PC-3 (cell line): ENCODE measurements at regions of chr15 and their contacts with region 1.

Region 1: DNA sequence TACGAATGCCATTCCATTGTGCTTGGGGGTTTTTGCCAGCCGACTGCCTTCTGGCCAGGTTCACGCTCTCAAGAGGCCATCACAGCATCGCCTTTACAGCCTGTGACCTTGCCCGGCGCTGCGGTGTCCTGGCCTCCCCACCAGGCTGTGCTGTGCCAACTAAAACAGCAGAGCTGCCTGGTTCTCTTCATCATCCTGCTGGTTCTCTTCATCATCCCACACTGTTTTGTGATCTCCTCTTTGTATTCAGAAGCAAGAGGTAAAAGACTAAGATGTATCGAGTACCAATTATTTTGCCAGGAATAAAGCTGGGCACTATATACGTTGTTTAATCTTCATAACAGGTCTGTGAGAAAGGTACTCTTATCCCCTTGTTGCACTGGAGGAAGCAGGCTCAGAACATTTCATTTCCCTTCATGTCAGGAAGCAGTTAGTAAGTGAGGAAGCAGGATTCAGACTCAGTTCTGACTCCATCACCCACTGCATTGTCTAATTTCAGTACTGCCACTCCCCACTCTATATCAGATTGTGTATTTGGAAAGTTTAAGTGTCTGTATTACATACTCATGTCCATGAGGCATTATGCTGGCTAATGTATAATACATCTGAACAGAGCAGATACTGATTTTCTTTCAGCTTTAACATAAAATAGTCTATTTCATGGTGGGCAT is 92.7 kb downstream of the LRRC28 start:
- DNase-seq: no peak
- ATAC-seq: no peak
- H3K4me3 ChIP-seq: no peak overlapping the region
- H3K27ac ChIP-seq: no peak overlapping the region
- H3K4me1 ChIP-seq: peaks cover 15% of the 10 kb centered on the region; the same call in 1 of the 2 replicates
- H3K27me3 ChIP-seq: no peaks in the 10 kb centered on the region
- CTCF ChIP-seq: peak; percentile 40

Region 2: DNA sequence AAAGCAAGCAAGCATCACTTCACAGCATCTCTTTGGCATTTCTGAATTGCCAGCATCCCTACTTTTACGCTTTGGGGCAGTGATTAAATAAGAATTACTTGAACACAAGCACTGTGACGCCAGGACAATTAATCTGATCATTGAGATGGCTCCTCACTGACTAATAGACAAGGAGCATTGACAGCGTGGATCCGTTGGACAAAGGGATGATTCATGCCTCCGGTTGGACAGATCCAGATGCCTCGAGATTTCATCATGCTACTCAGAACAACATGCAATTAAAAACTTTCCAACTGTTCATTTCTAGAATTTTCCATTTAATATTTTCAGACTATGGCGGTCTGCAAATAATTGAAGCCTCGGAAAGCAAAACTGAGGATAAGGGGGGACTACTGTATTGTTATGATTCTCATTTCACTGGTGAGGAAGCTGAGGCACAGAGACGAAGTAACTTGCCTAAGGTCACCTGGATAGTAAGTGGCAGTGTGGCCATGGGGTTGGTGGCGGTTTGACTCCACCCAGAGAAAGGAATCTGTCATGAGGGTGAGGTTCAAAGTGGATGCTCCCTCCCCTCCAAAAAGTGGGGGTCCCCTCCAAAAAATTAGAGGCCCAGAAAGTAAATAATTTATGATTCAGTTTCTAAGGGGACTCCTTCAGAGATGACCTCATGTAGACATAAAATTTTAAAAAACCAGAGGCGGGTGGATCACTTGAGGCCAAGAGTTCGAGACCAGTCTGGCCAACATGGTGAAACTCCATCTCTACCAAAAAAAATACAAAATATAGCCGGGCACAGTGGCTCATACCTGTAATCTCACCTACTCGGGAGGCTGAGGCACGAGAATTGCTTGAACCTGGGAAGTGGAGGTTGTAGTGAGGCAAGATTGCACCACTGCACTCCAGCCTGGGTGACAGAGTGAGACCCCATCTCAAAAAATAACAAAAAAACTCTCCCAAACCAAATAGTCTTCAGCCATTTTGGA is 324.2 kb before region 1 on chr15:
- CTCF ChIA-PET with region 1: no interaction called
- POLR2A ChIA-PET with region 1: no interaction called
- intact Hi-C with region 1: no loop called
- DNase-seq: peak; percentile 61
- ATAC-seq: no peak
- H3K4me3 ChIP-seq: no peak overlapping the region
- H3K27ac ChIP-seq: no peak overlapping the region
- H3K4me1 ChIP-seq: peaks cover 26% of the 10 kb centered on the region
- H3K27me3 ChIP-seq: no peaks in the 10 kb centered on the region
- CTCF ChIP-seq: no peak

Region 3: GRCh38 chr15:99315636-99316035 is 28.4 kb before region 1 on chr15:
- CTCF ChIA-PET with region 1: interaction called, 11 read pairs
- POLR2A ChIA-PET with region 1: no interaction called
- intact Hi-C with region 1: no loop called
- DNase-seq: peak; percentile 50
- ATAC-seq: peak; percentile 49; the same call in 1 of the 2 replicates
- H3K4me3 ChIP-seq: no peak overlapping the region
- H3K27ac ChIP-seq: no peak overlapping the region
- H3K4me1 ChIP-seq: peaks cover 10% of the 10 kb centered on the region
- H3K27me3 ChIP-seq: no peaks in the 10 kb centered on the region
- CTCF ChIP-seq: no peak

Region 4: DNA sequence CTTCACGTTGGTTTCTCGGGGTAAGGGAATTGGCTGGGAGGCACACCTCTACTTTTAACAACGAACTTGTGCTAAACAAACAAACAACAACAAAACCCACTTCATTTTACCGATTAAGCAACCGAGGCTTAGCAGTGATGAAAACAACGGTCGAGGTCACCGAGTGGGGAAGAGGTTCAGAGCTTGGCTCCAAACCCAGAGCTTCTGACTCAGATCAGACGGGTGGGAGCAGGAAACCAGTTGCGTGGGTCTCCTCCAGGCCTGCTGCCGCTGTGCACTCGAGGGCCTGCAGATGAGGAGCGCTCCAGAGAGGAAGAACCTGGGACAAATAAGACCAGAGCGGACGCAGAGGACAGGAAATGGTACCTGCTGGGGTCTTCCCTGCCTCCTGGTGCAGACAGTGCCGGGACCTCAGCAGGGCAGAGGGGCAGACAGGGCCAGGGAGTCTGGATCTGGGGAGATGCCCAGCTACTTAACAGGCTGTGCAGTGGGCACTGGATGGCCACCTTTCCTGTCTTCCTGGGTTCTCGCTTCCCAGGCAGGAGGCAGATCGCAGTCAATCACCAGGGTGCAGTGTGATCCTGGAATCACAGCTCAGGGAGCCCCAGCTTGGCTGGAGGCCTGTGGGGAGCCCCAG is 122.8 kb after region 1 on chr15:
- CTCF ChIA-PET with region 1: no interaction called
- POLR2A ChIA-PET with region 1: no interaction called
- intact Hi-C with region 1: no loop called
- DNase-seq: no peak
- ATAC-seq: no peak
- H3K4me3 ChIP-seq: no peak overlapping the region
- H3K27ac ChIP-seq: no peak overlapping the region
- H3K4me1 ChIP-seq: no peaks in the 10 kb centered on the region
- H3K27me3 ChIP-seq: no peaks in the 10 kb centered on the region
- CTCF ChIP-seq: no peak